Endothelial cell of umbilical vein (primary cell): ENCODE measurements at regions of chr19 and their contacts with region 1.

Region 1: DNA sequence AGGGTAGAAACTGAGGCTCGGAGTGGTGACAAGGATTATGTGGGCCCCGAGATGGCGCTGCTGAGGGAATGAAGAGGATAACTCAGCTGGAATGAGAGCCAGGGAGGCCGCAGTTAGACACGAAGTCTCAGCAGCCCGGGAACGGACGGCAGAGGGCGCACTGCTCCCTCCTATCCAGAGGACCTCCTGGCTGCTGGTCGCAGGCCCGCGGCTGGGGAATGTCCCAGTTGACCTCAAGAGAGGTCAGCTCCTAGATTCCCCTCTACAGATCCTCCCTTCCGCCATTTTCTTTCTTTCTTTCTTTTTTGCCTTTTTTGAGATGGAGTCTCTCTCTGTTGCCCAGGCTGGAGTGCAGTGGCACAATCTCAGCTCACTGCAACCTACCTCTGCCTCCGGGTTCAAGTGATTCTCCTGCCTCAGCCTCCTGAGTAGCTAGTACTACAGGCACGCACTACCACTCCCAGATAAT is 24.1 kb upstream of the ASPDH start:
- DNase-seq: peak; percentile 83
- H3K4me3 ChIP-seq: no peak overlapping the region
- H3K27ac ChIP-seq: no peak overlapping the region
- H3K4me1 ChIP-seq: no peaks in the 10 kb centered on the region
- H3K27me3 ChIP-seq: peaks cover 0 to 2% of the 10 kb centered on the region in 2 experiments
- CTCF ChIP-seq: peak; percentile 93 to 97
- POLR2A ChIP-seq: no peak

Region 2: DNA sequence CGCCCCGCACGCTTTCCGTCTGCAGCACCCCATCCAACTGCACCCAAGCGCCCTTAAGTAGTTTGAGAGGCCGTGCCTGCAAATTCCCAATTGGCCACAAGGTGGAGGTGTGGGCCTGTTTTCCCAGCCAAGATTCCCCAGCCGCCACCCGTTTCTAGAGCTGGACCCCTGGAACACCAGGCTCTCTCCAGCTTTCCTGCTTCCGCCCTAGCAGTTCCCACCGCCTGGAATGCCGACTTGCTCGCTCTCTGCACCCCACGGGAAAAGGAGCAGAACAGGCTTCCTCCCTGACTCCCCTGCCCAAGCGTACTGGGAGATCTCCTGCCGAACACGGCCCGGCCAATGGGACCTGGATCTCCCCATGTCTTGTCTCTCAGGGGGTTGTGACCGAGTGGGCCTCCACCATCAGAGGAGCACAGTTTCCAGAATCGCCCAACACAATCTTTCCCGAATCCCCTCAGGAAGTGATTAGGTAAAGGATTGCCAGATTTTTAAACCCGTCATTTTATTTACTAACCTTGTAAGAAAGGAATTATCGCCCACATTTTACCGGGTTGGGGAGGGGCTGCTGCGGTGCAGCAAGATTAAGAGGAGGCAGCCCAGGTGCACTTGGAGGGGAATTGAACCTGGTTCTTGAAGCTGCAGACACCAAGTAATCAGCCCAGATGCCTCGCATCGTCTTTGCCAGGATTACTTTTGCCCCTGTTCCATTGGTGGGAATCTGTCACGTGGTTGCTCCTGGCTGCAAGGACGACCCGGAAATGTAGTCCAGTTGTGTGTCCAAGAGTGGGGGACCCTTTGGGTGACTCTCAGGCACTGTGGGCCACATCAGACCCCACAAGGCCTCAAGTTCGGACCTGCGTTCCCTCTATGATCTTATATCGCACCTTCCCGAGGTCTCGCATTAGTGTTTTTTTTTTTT is 168.9 kb before region 1 on chr19:
- CTCF ChIA-PET with region 1: interaction called, 10 read pairs
- POLR2A ChIA-PET with region 1: no interaction called
- dilution Hi-C with region 1: no loop called
- intact Hi-C with region 1: loop called (anchors 1 kb)
- DNase-seq: peak; percentile 80
- H3K4me3 ChIP-seq: peak overlapping the region; percentile 20 to 53 (median 42)
- H3K27ac ChIP-seq: peak overlapping the region; percentile 19
- H3K4me1 ChIP-seq: peaks cover 5% of the 10 kb centered on the region
- H3K27me3 ChIP-seq: no peaks in the 10 kb centered on the region
- CTCF ChIP-seq: peak; percentile 71 to 84
- POLR2A ChIP-seq: no peak

Region 3: GRCh38 chr19:50520822-50521465 is 16.9 kb before region 1 on chr19:
- CTCF ChIA-PET with region 1: interaction called, 41 read pairs
- POLR2A ChIA-PET with region 1: interaction called, 5 read pairs
- dilution Hi-C with region 1: no loop called
- intact Hi-C with region 1: no loop called
- DNase-seq: no peak
- H3K4me3 ChIP-seq: no peak overlapping the region
- H3K27ac ChIP-seq: no peak overlapping the region
- H3K4me1 ChIP-seq: no peaks in the 10 kb centered on the region
- H3K27me3 ChIP-seq: no peaks in the 10 kb centered on the region
- CTCF ChIP-seq: no peak
- POLR2A ChIP-seq: no peak

Region 4: GRCh38 chr19:50562996-50563395 is 25.2 kb after region 1 on chr19:
- CTCF ChIA-PET with region 1: interaction called, 136 read pairs
- POLR2A ChIA-PET with region 1: no interaction called
- dilution Hi-C with region 1: no loop called
- intact Hi-C with region 1: loop called (anchors 1 kb)
- DNase-seq: no peak
- H3K4me3 ChIP-seq: no peak overlapping the region
- H3K27ac ChIP-seq: no peak overlapping the region
- H3K4me1 ChIP-seq: no peaks in the 10 kb centered on the region
- H3K27me3 ChIP-seq: peaks cover 14 to 25% of the 10 kb centered on the region in 2 experiments
- CTCF ChIP-seq: no peak
- POLR2A ChIP-seq: no peak

Region 5: DNA sequence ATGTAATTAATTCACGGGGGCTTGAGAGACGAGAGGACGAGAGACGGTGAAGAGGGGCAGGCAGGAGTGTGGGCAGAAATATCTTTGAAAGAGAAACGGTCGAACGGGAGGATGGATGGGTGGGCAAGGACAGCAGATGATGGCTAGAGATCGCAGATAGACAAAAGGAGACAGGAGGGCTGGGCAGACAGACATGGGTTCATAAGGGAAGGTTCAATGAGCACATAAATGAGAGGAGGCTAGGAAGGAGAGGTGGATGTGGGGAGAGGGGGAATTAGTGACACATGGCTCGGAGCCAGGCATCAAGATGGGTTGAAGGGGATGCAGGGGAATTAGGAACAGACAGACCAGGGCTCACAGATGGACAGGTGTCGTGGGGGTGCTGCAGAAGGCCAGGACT is 100.8 kb after region 1 on chr19:
- CTCF ChIA-PET with region 1: no interaction called
- POLR2A ChIA-PET with region 1: no interaction called
- dilution Hi-C with region 1: no loop called
- intact Hi-C with region 1: no loop called
- DNase-seq: no peak
- H3K4me3 ChIP-seq: no peak overlapping the region
- H3K27ac ChIP-seq: no peak overlapping the region
- H3K4me1 ChIP-seq: no peaks in the 10 kb centered on the region
- H3K27me3 ChIP-seq: peaks cover 20 to 22% of the 10 kb centered on the region in 2 experiments
- CTCF ChIP-seq: no peak
- POLR2A ChIP-seq: no peak

Region 6: DNA sequence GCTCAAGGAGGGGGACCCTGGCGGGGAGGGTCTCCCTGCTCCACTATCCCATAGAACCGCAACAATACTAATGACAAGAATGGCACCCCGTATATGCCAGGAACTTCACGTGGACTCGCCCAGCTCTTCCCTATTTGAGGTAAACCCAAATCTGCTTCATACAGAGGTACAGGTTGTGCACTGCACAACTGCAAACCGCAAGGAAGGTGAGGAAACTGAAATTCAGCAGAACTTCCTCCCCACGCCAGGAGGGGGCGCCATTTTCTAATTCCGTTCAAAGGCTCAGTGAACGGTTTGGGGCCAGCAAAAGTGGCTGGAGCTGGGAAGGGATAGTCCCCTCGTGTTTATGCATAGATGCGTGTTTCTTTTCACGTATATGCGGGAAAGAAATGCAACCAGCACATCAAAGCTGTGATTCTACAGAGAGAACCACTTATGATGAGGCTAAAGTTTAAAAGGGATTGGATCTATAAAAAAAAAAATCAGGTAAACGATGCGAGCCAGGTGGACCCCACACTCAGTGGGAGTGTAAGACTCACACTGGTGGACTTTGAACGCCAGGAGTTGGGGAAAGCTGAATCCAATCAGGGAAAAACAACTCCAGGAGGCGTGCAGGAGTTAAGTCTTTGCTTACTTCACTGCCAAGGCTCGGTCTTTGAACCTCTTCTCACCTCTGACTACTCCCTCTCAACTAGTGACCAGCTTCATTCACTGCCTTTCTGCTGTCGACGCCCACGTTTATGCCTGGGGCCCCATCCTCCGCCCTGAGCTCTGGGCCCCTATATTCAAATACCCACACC is 131.7 kb after region 1 on chr19:
- CTCF ChIA-PET with region 1: interaction called, 13 read pairs
- POLR2A ChIA-PET with region 1: no interaction called
- dilution Hi-C with region 1: no loop called
- intact Hi-C with region 1: no loop called
- DNase-seq: peak; percentile 31
- H3K4me3 ChIP-seq: no peak overlapping the region
- H3K27ac ChIP-seq: no peak overlapping the region
- H3K4me1 ChIP-seq: no peaks in the 10 kb centered on the region
- H3K27me3 ChIP-seq: peaks cover 21 to 31% of the 10 kb centered on the region in 2 experiments
- CTCF ChIP-seq: peak; percentile 75 to 76
- POLR2A ChIP-seq: no peak

Region 7: GRCh38 chr19:50686310-50687032 is 148.7 kb after region 1 on chr19:
- CTCF ChIA-PET with region 1: no interaction called
- POLR2A ChIA-PET with region 1: no interaction called
- dilution Hi-C with region 1: no loop called
- intact Hi-C with region 1: no loop called
- DNase-seq: no peak
- H3K4me3 ChIP-seq: no peak overlapping the region
- H3K27ac ChIP-seq: no peak overlapping the region
- H3K4me1 ChIP-seq: no peaks in the 10 kb centered on the region
- H3K27me3 ChIP-seq: peaks cover 13 to 15% of the 10 kb centered on the region in 2 experiments
- CTCF ChIP-seq: no peak
- POLR2A ChIP-seq: no peak

Region 8: DNA sequence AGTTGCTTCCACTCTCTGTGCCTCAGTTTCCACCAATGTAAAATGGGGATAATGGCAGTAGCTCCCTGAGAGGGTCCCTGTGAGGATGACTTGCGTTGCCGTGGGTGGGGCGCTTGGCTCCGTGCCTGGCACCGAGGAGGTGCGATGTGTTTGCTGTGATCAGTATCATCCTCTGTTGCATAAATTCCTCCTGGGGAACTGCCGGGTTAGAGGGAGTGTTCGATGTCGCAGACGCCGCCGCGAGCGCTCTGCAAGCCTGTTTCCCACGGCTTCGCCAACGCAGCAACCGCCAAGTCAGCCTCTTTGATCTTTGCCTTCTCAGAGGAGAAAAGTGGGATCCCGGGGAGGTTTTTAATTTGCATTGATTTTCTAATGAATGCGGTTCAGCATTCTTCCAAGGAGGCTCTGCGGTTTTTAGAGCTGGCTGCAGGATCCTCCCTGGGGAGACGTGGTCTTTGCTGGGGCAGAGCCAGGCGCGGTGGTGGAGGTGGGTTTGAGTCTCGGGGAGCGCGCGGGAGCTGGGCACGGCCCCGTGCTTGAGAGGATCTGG is 240.0 kb after region 1 on chr19:
- CTCF ChIA-PET with region 1: interaction called, 105 read pairs
- POLR2A ChIA-PET with region 1: no interaction called
- dilution Hi-C with region 1: no loop called
- intact Hi-C with region 1: no loop called
- DNase-seq: no peak
- H3K4me3 ChIP-seq: no peak overlapping the region
- H3K27ac ChIP-seq: no peak overlapping the region
- H3K4me1 ChIP-seq: no peaks in the 10 kb centered on the region
- H3K27me3 ChIP-seq: peaks cover 26 to 29% of the 10 kb centered on the region in 2 experiments
- CTCF ChIP-seq: no peak
- POLR2A ChIP-seq: no peak